ENCODE measurements at regions of chr2 and their contacts with region 1.

Region 1: GRCh38 chr2:199488772-199489400 is 31.1 kb upstream of the SATB2 start:
- ATAC-seq: peak in 3 of 8 experiments; percentile 41 to 60 (median 47)
- H3K4me3 ChIP-seq: no peak overlapping the region
- H3K27ac ChIP-seq: no peak overlapping the region
- H3K4me1 ChIP-seq: no peaks in the 10 kb centered on the region

Region 2: DNA sequence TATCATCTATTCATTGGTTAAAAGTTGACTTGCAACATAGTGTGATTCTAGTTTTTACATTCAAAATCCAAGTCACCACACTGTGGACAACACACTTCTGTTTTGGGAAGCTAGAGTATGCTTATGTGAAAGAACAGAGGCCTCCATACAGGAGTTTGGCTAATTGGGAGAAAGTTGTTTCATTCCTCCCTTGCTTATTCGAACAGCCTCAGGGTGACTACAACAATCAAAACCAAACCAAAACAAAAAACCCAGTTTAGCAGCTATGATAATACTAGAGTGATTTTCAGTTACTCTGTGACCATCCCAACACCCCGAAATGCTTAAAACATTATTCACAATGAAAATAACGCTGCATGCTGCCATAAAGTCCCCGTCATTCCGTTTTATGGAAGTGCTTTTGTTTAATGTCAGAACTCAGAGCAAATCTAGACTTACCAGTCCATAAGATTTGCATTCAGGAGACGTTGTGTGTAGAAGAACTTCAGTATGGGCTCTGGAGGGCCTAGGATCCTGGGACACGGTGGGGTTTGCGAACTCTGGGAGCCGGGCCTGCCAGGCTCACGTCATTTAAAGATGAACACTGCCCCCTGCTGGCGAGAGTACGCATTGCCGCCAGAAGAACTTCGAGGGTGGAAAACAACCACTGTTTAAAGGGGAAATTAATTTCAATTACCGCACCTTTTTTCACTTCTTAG is 250.7 kb after region 1 on chr2:
- in situ Hi-C with region 1: loop called in 2 of 9 experiments (anchors 25 kb)
- ATAC-seq: peak in 7 of 8 experiments; percentile 48 to 72 (median 54)
- H3K4me3 ChIP-seq: no peak overlapping the region
- H3K27ac ChIP-seq: no peak overlapping the region
- H3K4me1 ChIP-seq: peaks cover 0 to 4% of the 10 kb centered on the region in 2 donors

Measured in motor neuron (in vitro differentiated cells).